A673 (cell line): ENCODE measurements at regions of chr11 and their contacts with region 1.

Region 1: GRCh38 chr11:72080256-72080974 is at the starts of genes LRRC51 and NUMA1:
- DNase-seq: peak; percentile 100
- H3K4me3 ChIP-seq: peak within 1 kb of the TSS; percentile 72
- H3K27ac ChIP-seq: peak within 1 kb of the TSS; percentile 86
- H3K4me1 ChIP-seq: peaks cover 14% of the 10 kb centered on the region
- H3K27me3 ChIP-seq: no peaks in the 10 kb centered on the region
- CTCF ChIP-seq: no peak
- total RNA-seq, gene LRRC51: 13.9 and 16.7 TPM in 2 replicates
- total RNA-seq, gene NUMA1: 216 and 231 TPM in 2 replicates

Region 2: GRCh38 chr11:71991494-71991893 is 88.9 kb before region 1 on chr11:
- CTCF ChIA-PET with region 1: no interaction called
- POLR2A ChIA-PET with region 1: no interaction called
- intact Hi-C with region 1: no loop called
- DNase-seq: no peak
- H3K4me3 ChIP-seq: no peak overlapping the region
- H3K27ac ChIP-seq: no peak overlapping the region
- H3K4me1 ChIP-seq: no peaks in the 10 kb centered on the region
- H3K27me3 ChIP-seq: no peaks in the 10 kb centered on the region
- CTCF ChIP-seq: no peak

Region 3: GRCh38 chr11:72040726-72041441 is 39.5 kb before region 1 on chr11:
- CTCF ChIA-PET with region 1: interaction called, 3 read pairs
- POLR2A ChIA-PET with region 1: interaction called, 4 read pairs
- intact Hi-C with region 1: loop called (anchors 2 kb)
- DNase-seq: peak; percentile 96
- H3K4me3 ChIP-seq: peak overlapping the region; percentile 51
- H3K27ac ChIP-seq: peak overlapping the region; percentile 90
- H3K4me1 ChIP-seq: peaks cover 48% of the 10 kb centered on the region
- H3K27me3 ChIP-seq: no peaks in the 10 kb centered on the region
- CTCF ChIP-seq: no peak

Region 4: DNA sequence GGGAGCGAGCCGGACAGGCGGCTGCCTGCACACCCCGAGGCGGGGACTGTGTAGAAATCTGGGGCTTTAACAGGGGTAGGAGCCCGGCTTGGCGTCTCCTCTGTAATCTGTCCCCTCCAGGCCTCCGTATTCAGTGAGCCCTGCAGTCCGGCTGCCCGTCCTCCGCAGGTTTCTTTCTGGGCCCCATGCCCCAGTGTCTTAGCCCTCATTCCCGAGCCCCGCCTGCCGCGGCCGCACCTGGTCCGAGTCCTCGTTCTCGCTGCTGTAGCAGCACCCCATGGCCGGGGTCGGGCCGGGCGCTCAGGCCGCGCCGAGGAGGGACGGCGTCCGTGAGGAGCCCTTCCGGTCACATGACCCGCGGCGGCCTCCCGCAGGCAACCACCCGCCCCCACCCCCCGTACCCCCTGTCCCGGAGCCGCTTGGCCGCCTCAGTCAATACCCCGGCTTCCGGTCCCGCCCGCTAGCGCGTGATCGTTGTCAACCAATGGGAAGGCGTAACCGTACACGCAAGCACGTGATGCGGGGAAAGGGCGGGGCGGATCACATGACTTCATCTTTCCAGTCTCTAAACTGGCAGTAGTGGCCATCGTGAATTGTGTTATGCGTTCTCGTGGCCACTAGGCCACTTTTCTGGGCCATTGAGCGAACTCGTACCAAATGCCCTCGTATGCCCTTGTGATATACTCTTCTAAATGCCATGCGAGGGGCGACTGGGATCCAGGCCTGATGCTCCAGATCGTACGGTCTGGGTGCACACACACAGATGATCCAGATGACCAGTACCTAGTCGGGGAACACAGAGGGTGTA is 22.7 kb after region 1 on chr11 and contains the start of gene LAMTOR1:
- CTCF ChIA-PET with region 1: no interaction called
- POLR2A ChIA-PET with region 1: no interaction called
- intact Hi-C with region 1: loop called (anchors 1 kb)
- DNase-seq: peak; percentile 100
- H3K4me3 ChIP-seq: peak within 1 kb of the TSS; percentile 88
- H3K27ac ChIP-seq: peak within 1 kb of the TSS; percentile 94
- H3K4me1 ChIP-seq: peaks cover 14% of the 10 kb centered on the region
- H3K27me3 ChIP-seq: no peaks in the 10 kb centered on the region
- CTCF ChIP-seq: peak; percentile 48
- total RNA-seq, gene LAMTOR1: 90.9 and 101 TPM in 2 replicates

Region 5: GRCh38 chr11:72112321-72113219 is 32.2 kb after region 1 on chr11 and contains the start of gene ANAPC15:
- CTCF ChIA-PET with region 1: no interaction called
- POLR2A ChIA-PET with region 1: interaction called, 4 read pairs
- intact Hi-C with region 1: loop called (anchors 1 kb)
- DNase-seq: peak; percentile 100
- H3K4me3 ChIP-seq: peak within 1 kb of the TSS; percentile 56
- H3K27ac ChIP-seq: peak within 1 kb of the TSS; percentile 99
- H3K4me1 ChIP-seq: peaks cover 10% of the 10 kb centered on the region
- H3K27me3 ChIP-seq: no peaks in the 10 kb centered on the region
- CTCF ChIP-seq: no peak
- total RNA-seq, gene ANAPC15: 57.2 and 58.9 TPM in 2 replicates